Caco-2 (cell line): ENCODE measurements at regions of chr2 and their contacts with region 1.

Region 1: GRCh38 chr2:219155054-219155644 is 5.5 kb downstream of the NHEJ1 start:
- DNase-seq: peak; percentile 60 to 83
- H3K4me3 ChIP-seq: no peak overlapping the region
- H3K4me3 Mint-ChIP-seq: no peak overlapping the region
- H3K27ac Mint-ChIP-seq: no peak overlapping the region
- H3K4me1 ChIP-seq: 0 out of 2 replicates have a peak, but pooled peaks cover 4% of the 10 kb centered on the region
- H3K4me1 Mint-ChIP-seq: peaks cover 5% of the 10 kb centered on the region
- H3K27me3 ChIP-seq: no peaks in the 10 kb centered on the region
- H3K27me3 Mint-ChIP-seq: no peaks in the 10 kb centered on the region
- CTCF ChIP-seq: peak; percentile 59 to 85

Region 2: DNA sequence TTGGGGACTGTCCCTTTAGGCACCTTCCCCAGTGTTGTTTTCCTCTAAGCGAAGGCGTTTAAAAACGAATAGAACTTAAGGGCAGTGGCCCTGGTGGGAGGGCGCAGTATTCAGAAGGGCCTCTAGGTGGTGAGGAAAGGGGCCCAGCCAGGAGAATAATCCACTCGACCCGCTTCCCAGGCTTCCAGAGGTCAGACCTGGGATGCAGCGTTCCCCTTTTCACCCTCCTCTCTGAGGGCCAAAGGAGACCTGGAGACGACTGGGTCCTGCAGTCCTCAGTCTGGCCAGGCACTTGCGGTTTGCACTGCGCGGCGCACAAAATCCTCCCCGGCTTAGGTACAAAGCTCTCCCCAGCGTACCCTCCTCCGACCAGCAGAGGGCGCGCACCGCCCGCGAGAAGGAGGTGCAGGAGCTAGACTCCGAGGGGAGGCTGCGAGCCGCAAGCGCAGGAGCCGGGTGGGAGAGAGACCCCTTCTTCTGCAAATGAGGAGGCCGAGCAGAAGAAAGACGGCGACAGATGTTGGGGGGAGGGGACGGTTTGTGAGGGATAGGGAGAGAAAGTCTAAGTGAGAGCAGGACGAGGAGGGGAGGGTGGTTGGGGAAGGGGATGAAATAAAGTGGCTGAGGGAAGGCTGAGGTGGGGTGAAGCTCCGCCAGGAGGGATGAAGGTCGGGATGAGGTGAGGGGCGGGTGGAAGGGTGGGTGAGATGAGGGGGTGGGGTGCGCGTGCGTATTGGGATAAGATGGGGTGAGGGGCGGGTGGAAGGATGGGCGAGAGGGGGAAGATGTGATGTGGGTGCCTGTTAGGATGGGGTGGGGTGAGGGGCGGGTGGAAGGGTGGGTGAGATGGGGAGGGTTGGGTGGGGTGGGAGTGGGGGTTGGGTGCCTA is 175.1 kb before region 1 on chr2:
- CTCF ChIA-PET with region 1: interaction called, 11 read pairs
- POLR2A ChIA-PET with region 1: no interaction called
- intact Hi-C with region 1: loop called (anchors 1 kb)
- DNase-seq: peak; percentile 87 to 90
- H3K4me3 ChIP-seq: peak overlapping the region; percentile 28
- H3K4me3 Mint-ChIP-seq: peak overlapping the region; percentile 31
- H3K27ac Mint-ChIP-seq: no peak overlapping the region
- H3K4me1 ChIP-seq: peaks cover 14% of the 10 kb centered on the region
- H3K4me1 Mint-ChIP-seq: peaks cover 6% of the 10 kb centered on the region
- H3K27me3 ChIP-seq: peaks cover 9% of the 10 kb centered on the region
- H3K27me3 Mint-ChIP-seq: peaks cover 23% of the 10 kb centered on the region
- CTCF ChIP-seq: peak; percentile 92 to 97

Region 3: DNA sequence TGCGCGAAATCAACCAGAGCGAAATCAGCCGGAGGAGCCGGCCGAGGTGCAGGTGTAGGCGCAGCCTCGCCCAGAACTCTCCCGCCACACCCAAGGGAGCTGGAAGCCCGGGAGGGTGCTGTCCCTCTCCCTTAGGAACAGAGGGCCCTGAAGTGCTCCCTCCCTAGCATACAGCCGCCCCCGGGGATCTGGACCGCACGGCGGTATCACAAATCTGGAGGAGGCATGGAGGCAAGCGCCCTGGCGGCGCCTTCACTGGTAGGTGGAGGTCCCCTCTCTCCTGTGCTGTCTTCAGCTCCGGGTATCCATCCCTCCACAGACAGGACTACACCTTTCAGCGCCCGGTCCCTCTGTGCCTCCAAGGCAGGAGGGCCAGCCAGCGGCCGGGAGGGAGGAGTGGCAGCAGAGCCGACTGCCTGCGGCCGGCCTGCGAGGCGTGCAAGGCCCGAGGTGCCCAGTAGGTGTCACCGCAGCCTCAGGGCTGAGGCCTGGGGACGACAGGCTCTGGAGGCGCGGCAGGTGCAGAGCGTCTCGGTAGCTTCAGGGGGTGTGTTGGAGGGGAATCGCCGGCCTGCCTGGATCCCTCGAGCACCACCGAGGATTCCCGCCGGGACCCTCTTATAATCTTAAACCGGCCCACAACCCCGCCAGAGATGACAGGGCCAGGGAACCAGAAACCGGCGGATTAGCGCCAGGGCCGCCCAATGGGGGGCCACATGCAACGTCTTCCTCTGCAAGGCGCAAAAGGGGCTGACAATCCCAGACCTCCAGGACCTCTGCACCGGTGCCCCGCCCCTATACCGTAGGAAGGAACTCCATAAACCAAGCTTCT is 97.2 kb before region 1 on chr2:
- CTCF ChIA-PET with region 1: interaction called, 57 read pairs
- POLR2A ChIA-PET with region 1: no interaction called
- intact Hi-C with region 1: loop called (anchors 1 kb)
- DNase-seq: peak; percentile 82 to 89
- H3K4me3 ChIP-seq: peak overlapping the region; percentile 99
- H3K4me3 Mint-ChIP-seq: peak overlapping the region; percentile 92
- H3K27ac Mint-ChIP-seq: no peak overlapping the region
- H3K4me1 ChIP-seq: peaks cover 11% of the 10 kb centered on the region
- H3K4me1 Mint-ChIP-seq: peaks cover 7% of the 10 kb centered on the region
- H3K27me3 ChIP-seq: no peaks in the 10 kb centered on the region
- H3K27me3 Mint-ChIP-seq: peaks cover 3% of the 10 kb centered on the region
- CTCF ChIP-seq: peak; percentile 91 to 95

Region 4: DNA sequence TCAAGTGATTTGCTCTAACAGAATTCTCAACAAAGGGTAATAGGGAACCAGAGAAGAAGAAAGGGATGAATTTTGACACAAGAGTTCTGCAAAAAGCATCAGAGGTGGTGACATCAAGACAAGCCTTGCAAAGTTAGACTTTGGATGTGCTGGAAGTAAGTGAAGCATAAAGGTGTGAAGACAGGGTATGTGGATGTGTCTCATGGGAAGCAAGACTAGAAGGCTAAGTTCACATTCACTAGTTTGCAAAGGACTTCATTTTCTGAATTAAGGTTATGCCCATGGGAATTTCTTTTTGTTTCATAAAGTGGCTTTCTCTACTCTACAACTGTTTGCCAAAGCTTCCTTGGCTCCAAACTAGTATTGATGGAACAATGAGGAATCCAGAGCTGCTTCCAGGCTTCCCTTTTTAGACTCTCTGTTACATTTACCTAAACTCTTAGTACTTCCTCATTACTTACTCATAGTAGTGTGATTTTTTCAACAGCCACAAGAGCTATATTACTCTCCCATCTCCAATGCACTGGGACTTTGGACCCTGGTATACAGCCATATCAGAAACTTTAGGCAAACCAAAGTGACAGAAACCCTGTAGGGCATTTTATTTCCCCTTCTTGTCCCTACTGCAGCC is 73.3 kb before region 1 on chr2:
- CTCF ChIA-PET with region 1: interaction called, 10 read pairs
- POLR2A ChIA-PET with region 1: no interaction called
- intact Hi-C with region 1: no loop called
- DNase-seq: peak in 1 of 2 experiments; percentile 11
- H3K4me3 ChIP-seq: no peak overlapping the region
- H3K4me3 Mint-ChIP-seq: no peak overlapping the region
- H3K27ac Mint-ChIP-seq: no peak overlapping the region
- H3K4me1 ChIP-seq: peaks cover 15% of the 10 kb centered on the region
- H3K4me1 Mint-ChIP-seq: peaks cover 25% of the 10 kb centered on the region
- H3K27me3 ChIP-seq: no peaks in the 10 kb centered on the region
- H3K27me3 Mint-ChIP-seq: no peaks in the 10 kb centered on the region
- CTCF ChIP-seq: no peak

Region 5: GRCh38 chr2:219125225-219125885 is 29.8 kb before region 1 on chr2:
- CTCF ChIA-PET with region 1: interaction called, 23 read pairs
- POLR2A ChIA-PET with region 1: no interaction called
- intact Hi-C with region 1: loop called (anchors 1 kb)
- DNase-seq: peak; percentile 57 to 85
- H3K4me3 ChIP-seq: no peak overlapping the region
- H3K4me3 Mint-ChIP-seq: peak overlapping the region; percentile 53
- H3K27ac Mint-ChIP-seq: peak overlapping the region; percentile 25
- H3K4me1 ChIP-seq: peaks cover 73% of the 10 kb centered on the region
- H3K4me1 Mint-ChIP-seq: peaks cover 50% of the 10 kb centered on the region
- H3K27me3 ChIP-seq: no peaks in the 10 kb centered on the region
- H3K27me3 Mint-ChIP-seq: no peaks in the 10 kb centered on the region
- CTCF ChIP-seq: no peak